HEK293T (cell line): ENCODE measurements at regions of chr1 and their contacts with region 1.

Region 1: DNA sequence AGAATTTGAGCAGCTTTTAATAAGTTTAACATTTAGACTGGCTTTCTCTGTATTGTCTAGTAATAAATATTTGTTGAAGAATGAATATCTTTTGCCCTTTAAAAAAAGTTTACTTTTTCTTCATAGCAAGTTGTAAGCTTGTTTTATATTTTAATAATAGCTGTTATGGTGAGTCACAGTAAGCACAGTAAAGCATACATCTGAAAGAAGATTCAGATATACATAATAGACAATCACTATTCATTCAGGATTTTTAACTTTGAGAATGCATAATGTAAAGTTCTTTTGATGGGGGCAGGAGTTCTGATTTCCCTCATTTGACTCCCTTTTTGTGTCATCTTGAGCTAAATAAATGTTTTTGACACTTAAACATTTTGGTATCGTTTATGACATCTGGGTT is 66.0 kb downstream of the ZMYM4 start:
- DNase-seq: no peak

Region 2: DNA sequence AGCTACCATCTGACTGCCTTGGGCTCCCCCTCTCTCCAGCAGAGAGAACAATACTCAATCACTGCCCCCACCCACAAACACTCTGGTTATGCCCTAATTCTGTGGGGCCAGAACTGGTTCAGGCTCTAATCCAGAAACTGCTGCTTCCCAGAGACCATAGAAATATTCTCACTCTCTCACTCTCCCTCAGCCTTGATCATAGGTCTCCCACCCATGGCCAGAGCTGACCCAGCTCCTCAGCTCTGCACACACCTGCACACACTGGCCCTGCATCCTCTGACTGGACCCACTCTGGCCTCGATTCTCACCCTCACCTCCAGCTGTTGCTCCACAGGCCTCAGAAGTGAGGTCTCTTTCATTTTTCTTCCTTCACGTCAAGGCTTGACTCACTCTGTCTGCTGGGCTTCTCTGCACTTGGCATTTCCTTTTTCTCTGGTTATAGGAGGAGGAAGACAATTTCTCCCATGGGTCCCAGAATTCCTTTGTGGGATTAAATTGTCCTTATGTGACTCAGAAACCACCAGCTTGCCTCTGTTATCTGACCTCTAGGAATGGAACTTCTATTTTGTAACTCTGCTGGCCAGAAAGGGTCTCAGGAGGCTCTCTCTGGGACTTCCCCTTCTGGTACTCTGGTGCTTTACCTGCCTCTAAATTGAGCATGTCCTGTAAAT is 287.2 kb before region 1 on chr1:
- CTCF ChIA-PET with region 1: interaction called, 12 read pairs
- POLR2A ChIA-PET with region 1: no interaction called
- DNase-seq: no peak

Region 3: GRCh38 chr1:35345439-35345981 is 11.0 kb after region 1 on chr1:
- CTCF ChIA-PET with region 1: no interaction called
- POLR2A ChIA-PET with region 1: no interaction called
- DNase-seq: no peak